ENCODE measurements at regions of chr2 and their contacts with region 1.

Region 1: GRCh38 chr2:168192839-168193616 is 54.4 kb downstream of the STK39 start:
- DNase-seq: peak; percentile 34
- H3K4me3 ChIP-seq: no peak overlapping the region
- H3K27ac ChIP-seq: no peak overlapping the region
- H3K4me1 ChIP-seq: peaks cover 25% of the 10 kb centered on the region
- H3K27me3 ChIP-seq: no peaks in the 10 kb centered on the region
- CTCF ChIP-seq: no peak
- POLR2A ChIP-seq: no peak

Region 2: DNA sequence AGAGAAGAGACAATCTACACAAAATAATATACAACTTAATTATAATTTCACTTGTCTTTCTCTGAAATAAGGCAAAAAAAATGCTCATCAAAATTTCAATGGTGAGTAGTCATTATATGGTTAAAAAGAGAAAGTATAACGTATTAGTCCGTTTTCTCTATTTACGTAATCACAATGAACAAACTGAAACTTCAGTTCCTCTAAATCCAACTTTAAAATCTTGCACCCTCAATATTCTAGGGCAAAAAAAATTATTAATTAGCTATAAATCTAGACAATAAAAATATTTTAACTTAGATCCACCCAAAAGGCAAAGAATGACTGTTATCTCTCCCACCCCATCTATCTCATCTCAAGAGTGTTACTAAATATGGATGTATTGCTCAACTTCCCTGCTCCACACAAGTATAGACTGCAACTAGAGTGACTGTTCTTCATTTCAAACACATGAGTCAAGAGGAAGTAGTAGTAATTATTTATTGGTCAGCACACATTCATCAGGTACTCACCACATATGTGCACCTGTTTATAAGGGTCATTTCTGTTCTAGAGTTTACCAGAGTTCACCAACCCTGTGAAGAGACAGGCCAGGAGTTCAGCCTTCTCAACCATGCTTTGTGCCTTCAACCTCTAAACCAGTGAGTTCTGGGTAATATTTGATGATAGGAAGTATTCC is 18.0 kb after region 1 on chr2:
- CTCF ChIA-PET with region 1: interaction called, 3 read pairs
- POLR2A ChIA-PET with region 1: no interaction called
- dilution Hi-C with region 1: no loop called
- intact Hi-C with region 1: loop called (anchors 2 kb)
- DNase-seq: peak; percentile 68
- H3K4me3 ChIP-seq: peak overlapping the region in 1 of 3 experiments; percentile 37
- H3K27ac ChIP-seq: peak overlapping the region; percentile 50
- H3K4me1 ChIP-seq: peaks cover 21% of the 10 kb centered on the region
- H3K27me3 ChIP-seq: no peaks in the 10 kb centered on the region
- CTCF ChIP-seq: no peak
- POLR2A ChIP-seq: no peak

Region 3: GRCh38 chr2:168231609-168232241 is 38.7 kb after region 1 on chr2:
- CTCF ChIA-PET with region 1: no interaction called
- POLR2A ChIA-PET with region 1: no interaction called
- dilution Hi-C with region 1: no loop called
- intact Hi-C with region 1: no loop called
- DNase-seq: no peak
- H3K4me3 ChIP-seq: no peak overlapping the region
- H3K27ac ChIP-seq: no peak overlapping the region
- H3K4me1 ChIP-seq: no peaks in the 10 kb centered on the region
- H3K27me3 ChIP-seq: no peaks in the 10 kb centered on the region
- CTCF ChIP-seq: no peak
- POLR2A ChIP-seq: no peak